CD8-positive, alpha-beta T cell (primary cell): ENCODE measurements at regions of chr3 and their contacts with region 1.

Region 1: GRCh38 chr3:136196401-136197158 is 445 bp upstream of the MSL2 start:
- DNase-seq: peak; percentile 95 to 99 (median 99)
- ATAC-seq: peak; percentile 60
- H3K4me3 ChIP-seq: peak overlapping the region; percentile 84 to 91
- H3K4me3 Mint-ChIP-seq: peak overlapping the region; percentile 99
- H3K27ac ChIP-seq: peak overlapping the region; percentile 71 to 96
- H3K27ac Mint-ChIP-seq: peak overlapping the region; percentile 100
- H3K4me1 ChIP-seq: peaks cover 16% of the 10 kb centered on the region
- H3K4me1 Mint-ChIP-seq: peaks cover 37% of the 10 kb centered on the region
- H3K27me3 ChIP-seq: no peaks in the 10 kb centered on the region
- H3K27me3 Mint-ChIP-seq: no peaks in the 10 kb centered on the region
- CTCF ChIP-seq: no peak

Region 2: DNA sequence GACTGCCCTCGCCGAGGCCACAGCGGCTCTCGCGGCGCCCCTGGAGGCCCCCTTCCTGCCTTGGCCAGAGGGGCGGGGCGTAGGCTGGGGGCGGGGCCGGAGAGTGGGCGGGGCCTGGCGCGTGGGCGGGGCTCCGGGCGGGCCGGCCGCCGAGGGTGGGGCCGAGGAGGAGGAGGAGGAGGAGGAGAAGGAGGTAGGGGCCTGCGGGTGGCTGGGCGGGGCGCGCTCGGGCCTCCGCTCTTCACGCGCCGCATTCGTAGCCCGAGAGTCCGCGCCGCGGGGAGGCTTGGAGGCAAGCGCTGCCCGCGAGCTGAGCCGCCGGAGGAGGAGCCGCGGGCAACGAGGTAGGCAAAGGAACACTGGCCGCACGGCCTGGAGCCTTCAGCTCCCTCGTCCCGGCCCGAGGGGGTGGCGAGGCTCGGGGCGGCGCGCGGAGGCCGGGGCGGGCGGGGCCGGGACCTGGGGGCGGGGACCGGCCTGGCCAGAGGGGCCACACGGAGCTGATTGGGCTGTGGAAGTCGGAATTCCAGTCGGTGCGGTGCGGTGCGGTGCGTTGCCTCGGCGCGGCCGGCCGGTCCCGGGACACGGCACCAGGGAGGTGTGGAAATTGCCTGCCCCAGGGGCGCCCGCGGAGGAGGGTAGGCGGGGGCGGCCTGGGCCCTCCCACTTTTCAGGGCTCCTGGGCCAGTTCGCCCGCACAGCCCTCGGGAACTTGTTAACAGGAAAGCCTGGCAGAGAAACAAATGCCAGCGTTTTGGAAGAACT is 230.9 kb before region 1 on chr3 and contains the start of gene PPP2R3A:
- CTCF ChIA-PET with region 1: no interaction called
- POLR2A ChIA-PET with region 1: no interaction called
- intact Hi-C with region 1: loop called in 1 of 2 experiments (anchors 10 kb)
- DNase-seq: peak; percentile 40 to 83 (median 61)
- ATAC-seq: peak; percentile 93
- H3K4me3 ChIP-seq: peak within 1 kb of the TSS; percentile 61 to 63
- H3K4me3 Mint-ChIP-seq: peak within 1 kb of the TSS; percentile 81
- H3K27ac ChIP-seq: no peak within 1 kb of the TSS
- H3K27ac Mint-ChIP-seq: peak within 1 kb of the TSS; percentile 25
- H3K4me1 ChIP-seq: peaks cover 10% of the 10 kb centered on the region
- H3K4me1 Mint-ChIP-seq: peaks cover 12% of the 10 kb centered on the region
- H3K27me3 ChIP-seq: peaks cover 0 to 5% of the 10 kb centered on the region in 2 experiments
- H3K27me3 Mint-ChIP-seq: peaks cover 39% of the 10 kb centered on the region
- CTCF ChIP-seq: no peak
- total RNA-seq, gene PPP2R3A: 0.08 to 0.11 TPM

Region 3: GRCh38 chr3:136149667-136150066 is 46.9 kb before region 1 on chr3:
- CTCF ChIA-PET with region 1: no interaction called
- POLR2A ChIA-PET with region 1: interaction called, 15 read pairs
- intact Hi-C with region 1: loop called (anchors 2 kb)
- DNase-seq: no peak
- ATAC-seq: no peak
- H3K4me3 ChIP-seq: no peak overlapping the region
- H3K4me3 Mint-ChIP-seq: no peak overlapping the region
- H3K27ac ChIP-seq: no peak overlapping the region
- H3K27ac Mint-ChIP-seq: no peak overlapping the region
- H3K4me1 ChIP-seq: peaks cover 24% of the 10 kb centered on the region
- H3K4me1 Mint-ChIP-seq: peaks cover 67% of the 10 kb centered on the region
- H3K27me3 ChIP-seq: no peaks in the 10 kb centered on the region
- H3K27me3 Mint-ChIP-seq: no peaks in the 10 kb centered on the region
- CTCF ChIP-seq: no peak

Region 4: DNA sequence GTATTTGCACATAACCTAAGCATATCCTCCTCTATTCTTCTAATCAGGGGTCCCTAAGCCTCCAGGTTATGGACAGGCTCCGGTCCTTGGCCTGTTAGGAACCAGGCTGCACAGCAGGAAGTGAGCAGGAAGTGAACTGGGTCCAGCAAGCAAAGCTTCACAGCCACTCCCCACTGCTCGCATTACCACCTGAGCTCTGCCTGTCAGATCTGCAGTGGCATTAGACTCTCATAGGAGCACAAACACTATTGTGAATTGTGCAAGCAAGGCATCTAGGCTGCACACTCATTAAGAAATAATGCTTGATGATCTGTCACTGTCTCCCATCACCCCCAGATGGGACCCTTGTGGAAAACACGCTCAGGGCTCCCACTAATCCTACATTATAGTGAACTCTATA is 10.2 kb before region 1 on chr3:
- CTCF ChIA-PET with region 1: interaction called, 4 read pairs
- POLR2A ChIA-PET with region 1: interaction called, 9 read pairs
- intact Hi-C with region 1: loop called in 1 of 2 experiments (anchors 1 kb)
- DNase-seq: peak in 5 of 9 experiments; percentile 15 to 57 (median 38)
- ATAC-seq: peak; percentile 50
- H3K4me3 ChIP-seq: peak overlapping the region in 1 of 2 experiments; percentile 14
- H3K4me3 Mint-ChIP-seq: peak overlapping the region; percentile 61
- H3K27ac ChIP-seq: peak overlapping the region in 1 of 2 experiments; percentile 28
- H3K27ac Mint-ChIP-seq: peak overlapping the region; percentile 63
- H3K4me1 ChIP-seq: peaks cover 94% of the 10 kb centered on the region
- H3K4me1 Mint-ChIP-seq: peaks cover 78% of the 10 kb centered on the region
- H3K27me3 ChIP-seq: no peaks in the 10 kb centered on the region
- H3K27me3 Mint-ChIP-seq: no peaks in the 10 kb centered on the region
- CTCF ChIP-seq: no peak

Region 5: DNA sequence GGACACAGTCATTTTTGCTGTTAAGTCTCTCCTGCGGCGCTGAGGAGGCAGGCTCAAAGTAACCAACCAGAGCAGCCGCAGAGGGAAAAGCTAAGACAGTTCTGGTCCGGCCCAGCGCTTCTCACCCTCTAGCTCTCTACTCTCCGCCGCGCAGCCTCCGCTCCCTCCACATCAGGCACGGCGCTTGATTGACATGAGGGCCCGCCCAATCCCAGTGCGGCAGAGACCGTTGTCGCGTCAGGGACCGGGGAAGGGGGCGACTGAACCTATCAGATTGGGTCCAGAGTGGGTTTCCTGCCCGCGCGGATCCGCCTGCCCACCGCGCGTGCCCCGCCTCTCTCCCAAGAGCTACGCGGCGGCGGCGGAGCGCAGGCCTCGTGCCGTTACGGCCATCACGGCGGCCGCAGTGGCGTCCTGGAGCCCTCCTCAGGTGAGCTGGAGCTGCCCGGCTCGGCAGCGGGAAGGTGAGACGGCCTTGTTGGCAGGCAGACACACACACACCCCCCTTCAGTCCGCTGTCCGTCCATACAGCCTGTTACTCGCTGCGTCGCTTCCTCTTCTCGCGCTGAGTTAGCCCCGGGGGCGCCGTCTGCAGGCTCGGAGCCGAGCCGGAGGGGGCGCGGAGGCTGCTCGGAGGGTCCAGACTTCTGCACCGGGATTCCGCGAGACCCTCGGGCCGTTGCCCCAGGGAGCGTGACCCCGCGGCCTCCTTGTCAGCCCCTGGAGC is 665.5 kb after region 1 on chr3 and contains the start of gene NCK1:
- CTCF ChIA-PET with region 1: interaction called, 3 read pairs
- POLR2A ChIA-PET with region 1: interaction called, 9 read pairs
- intact Hi-C with region 1: loop called (anchors 1 to 2 kb)
- DNase-seq: peak; percentile 97 to 100 (median 99)
- ATAC-seq: peak; percentile 93
- H3K4me3 ChIP-seq: peak within 1 kb of the TSS; percentile 76 to 92
- H3K4me3 Mint-ChIP-seq: peak within 1 kb of the TSS; percentile 90
- H3K27ac ChIP-seq: peak within 1 kb of the TSS; percentile 86 to 96
- H3K27ac Mint-ChIP-seq: peak within 1 kb of the TSS; percentile 98
- H3K4me1 ChIP-seq: peaks cover 23% of the 10 kb centered on the region
- H3K4me1 Mint-ChIP-seq: peaks cover 63% of the 10 kb centered on the region
- H3K27me3 ChIP-seq: no peaks in the 10 kb centered on the region
- H3K27me3 Mint-ChIP-seq: no peaks in the 10 kb centered on the region
- CTCF ChIP-seq: no peak
- total RNA-seq, gene NCK1: 54.8 to 68.7 TPM

Region 6: GRCh38 chr3:138174421-138175122 is 1978.0 kb after region 1 on chr3 and contains the start of gene DBR1:
- CTCF ChIA-PET with region 1: no interaction called
- POLR2A ChIA-PET with region 1: no interaction called
- intact Hi-C with region 1: loop called in 1 of 2 experiments (anchors 5 kb)
- DNase-seq: peak; percentile 51 to 89 (median 74)
- ATAC-seq: peak; percentile 87
- H3K4me3 ChIP-seq: peak within 1 kb of the TSS; percentile 76
- H3K4me3 Mint-ChIP-seq: peak within 1 kb of the TSS; percentile 99
- H3K27ac ChIP-seq: peak within 1 kb of the TSS; percentile 71 to 79
- H3K27ac Mint-ChIP-seq: peak within 1 kb of the TSS; percentile 98
- H3K4me1 ChIP-seq: peaks cover 21% of the 10 kb centered on the region
- H3K4me1 Mint-ChIP-seq: peaks cover 40% of the 10 kb centered on the region
- H3K27me3 ChIP-seq: no peaks in the 10 kb centered on the region
- H3K27me3 Mint-ChIP-seq: no peaks in the 10 kb centered on the region
- CTCF ChIP-seq: no peak
- total RNA-seq, gene DBR1: 31.2 to 31.9 TPM